Activated T-helper 1 cell treated with anti-CD3 and anti-CD28 coated beads, Interleukin-12 subunit alpha, Interleukin-12 subunit beta, Interleukin-2, Interleukin-4 antibody, amounts not matched to agents 30 ng/mL and 10 ng/mL and 1 ng/mL, durations not matched to agents 14 hours and 24 hours and 36 hours (primary cell): ENCODE measurements at regions of chr3 and their contacts with region 1.

Region 1: DNA sequence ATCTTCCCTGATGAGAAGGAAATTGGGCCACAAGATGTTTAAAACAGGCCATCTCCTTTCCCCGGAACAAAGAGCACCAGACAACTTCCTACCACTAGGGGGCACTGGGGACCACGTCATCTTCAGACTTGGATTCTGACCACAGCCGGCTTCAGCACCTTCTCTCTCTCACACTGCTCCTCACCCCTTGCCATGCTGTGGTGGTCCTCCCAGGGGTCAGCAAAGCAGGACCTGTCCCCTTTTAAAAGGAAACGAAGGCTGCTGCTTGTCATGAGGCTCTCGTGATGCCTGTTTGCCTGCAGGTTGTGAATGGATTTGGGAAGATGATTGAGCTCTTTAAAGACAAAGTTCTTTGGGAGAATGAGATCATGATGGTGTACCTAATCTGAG is 16.2 kb downstream of the RFT1 start:
- DNase-seq: peak; percentile 76
- H3K4me3 Mint-ChIP-seq: no peak overlapping the region
- H3K27ac Mint-ChIP-seq: no peak overlapping the region
- H3K4me1 Mint-ChIP-seq: peaks cover 19% of the 10 kb centered on the region
- H3K27me3 Mint-ChIP-seq: no peaks in the 10 kb centered on the region

Region 2: GRCh38 chr3:52623234-52623792 is 490.7 kb before region 1 on chr3:
- intact Hi-C with region 1: no loop called
- DNase-seq: no peak
- H3K4me3 Mint-ChIP-seq: no peak overlapping the region
- H3K27ac Mint-ChIP-seq: no peak overlapping the region
- H3K4me1 Mint-ChIP-seq: peaks cover 27% of the 10 kb centered on the region
- H3K27me3 Mint-ChIP-seq: no peaks in the 10 kb centered on the region

Region 3: GRCh38 chr3:52897130-52898122 is 216.6 kb before region 1 on chr3 and contains the start of gene STIMATE:
- intact Hi-C with region 1: loop called (anchors 1 kb)
- DNase-seq: peak; percentile 87
- H3K4me3 Mint-ChIP-seq: peak within 1 kb of the TSS; percentile 97
- H3K27ac Mint-ChIP-seq: peak within 1 kb of the TSS; percentile 77
- H3K4me1 Mint-ChIP-seq: peaks cover 49% of the 10 kb centered on the region
- H3K27me3 Mint-ChIP-seq: no peaks in the 10 kb centered on the region
- total RNA-seq, gene STIMATE: 19.8 and 20.1 TPM in 2 replicates

Region 4: GRCh38 chr3:53072653-53073552 is 41.1 kb before region 1 on chr3:
- intact Hi-C with region 1: loop called (anchors 2 kb)
- DNase-seq: peak; percentile 85
- H3K4me3 Mint-ChIP-seq: peak overlapping the region; percentile 89
- H3K27ac Mint-ChIP-seq: peak overlapping the region; percentile 95
- H3K4me1 Mint-ChIP-seq: peaks cover 19% of the 10 kb centered on the region
- H3K27me3 Mint-ChIP-seq: peaks cover 2% of the 10 kb centered on the region

Region 5: GRCh38 chr3:53130179-53131061 is 16.4 kb after region 1 on chr3 and contains the start of gene RFT1:
- intact Hi-C with region 1: loop called (anchors 1 kb)
- DNase-seq: peak; percentile 96
- H3K4me3 Mint-ChIP-seq: peak within 1 kb of the TSS; percentile 96
- H3K27ac Mint-ChIP-seq: peak within 1 kb of the TSS; percentile 94
- H3K4me1 Mint-ChIP-seq: peaks cover 22% of the 10 kb centered on the region
- H3K27me3 Mint-ChIP-seq: no peaks in the 10 kb centered on the region
- total RNA-seq, gene RFT1: 44.9 and 46.2 TPM in 2 replicates

Region 6: DNA sequence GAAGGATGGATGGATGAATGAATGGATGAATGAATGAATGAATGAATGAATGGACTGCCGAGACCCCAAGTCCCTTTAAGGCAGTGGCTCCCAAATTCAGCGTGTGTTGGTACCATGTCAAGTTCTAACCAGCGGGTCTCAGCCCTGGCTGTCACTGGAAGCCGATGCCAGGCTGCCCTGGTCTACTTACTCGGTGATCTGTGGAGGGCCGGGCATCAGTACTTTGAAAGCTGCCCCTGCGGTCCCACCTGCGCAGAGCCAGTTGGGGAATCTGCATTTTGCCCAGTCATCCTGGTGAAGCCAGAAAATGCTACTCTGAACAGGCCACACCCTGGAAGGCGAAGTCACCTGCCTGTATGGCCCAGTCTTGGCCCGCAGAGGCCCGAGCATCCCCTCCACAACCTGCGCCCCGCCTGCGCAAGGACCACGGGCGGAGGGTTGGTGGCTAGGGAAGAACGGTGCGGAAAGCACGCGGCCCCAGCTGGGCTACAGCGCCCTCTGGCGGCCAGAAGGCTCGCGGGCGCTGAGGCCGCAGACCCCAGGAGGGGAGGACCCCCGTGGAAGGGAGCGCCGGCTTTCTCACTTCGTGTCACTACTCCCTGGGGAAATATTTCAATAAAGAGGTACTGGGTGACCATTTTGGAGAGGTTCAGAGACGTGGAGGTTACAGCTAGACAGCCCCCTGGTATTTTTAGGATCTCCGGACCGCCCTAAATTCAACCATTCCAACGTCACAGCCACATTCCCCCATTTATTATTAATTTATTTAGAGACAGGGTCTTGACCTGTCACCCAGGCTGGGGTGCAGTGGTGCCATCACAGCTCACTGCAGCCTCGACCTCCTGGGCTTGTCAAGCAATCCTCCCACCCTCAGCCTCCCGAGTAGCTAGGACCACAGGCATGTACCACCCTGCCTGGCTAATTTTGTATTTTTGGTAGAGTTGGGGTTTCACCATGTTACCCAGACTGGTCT is 81.9 kb after region 1 on chr3:
- intact Hi-C with region 1: loop called (anchors 1 kb)
- DNase-seq: peak; percentile 48
- H3K4me3 Mint-ChIP-seq: no peak overlapping the region
- H3K27ac Mint-ChIP-seq: peak overlapping the region; percentile 56
- H3K4me1 Mint-ChIP-seq: peaks cover 11% of the 10 kb centered on the region
- H3K27me3 Mint-ChIP-seq: peaks cover 2% of the 10 kb centered on the region

Region 7: GRCh38 chr3:53347261-53348064 is 233.5 kb after region 1 on chr3 and contains the start of gene DCP1A:
- intact Hi-C with region 1: loop called (anchors 1 kb)
- DNase-seq: peak; percentile 96
- H3K4me3 Mint-ChIP-seq: peak within 1 kb of the TSS; percentile 98
- H3K27ac Mint-ChIP-seq: peak within 1 kb of the TSS; percentile 98
- H3K4me1 Mint-ChIP-seq: peaks cover 37% of the 10 kb centered on the region
- H3K27me3 Mint-ChIP-seq: no peaks in the 10 kb centered on the region
- total RNA-seq, gene DCP1A: 46.3 and 48.6 TPM in 2 replicates